K562 (cell line): ENCODE measurements at regions of chr18 and their contacts with region 1.

Region 1: DNA sequence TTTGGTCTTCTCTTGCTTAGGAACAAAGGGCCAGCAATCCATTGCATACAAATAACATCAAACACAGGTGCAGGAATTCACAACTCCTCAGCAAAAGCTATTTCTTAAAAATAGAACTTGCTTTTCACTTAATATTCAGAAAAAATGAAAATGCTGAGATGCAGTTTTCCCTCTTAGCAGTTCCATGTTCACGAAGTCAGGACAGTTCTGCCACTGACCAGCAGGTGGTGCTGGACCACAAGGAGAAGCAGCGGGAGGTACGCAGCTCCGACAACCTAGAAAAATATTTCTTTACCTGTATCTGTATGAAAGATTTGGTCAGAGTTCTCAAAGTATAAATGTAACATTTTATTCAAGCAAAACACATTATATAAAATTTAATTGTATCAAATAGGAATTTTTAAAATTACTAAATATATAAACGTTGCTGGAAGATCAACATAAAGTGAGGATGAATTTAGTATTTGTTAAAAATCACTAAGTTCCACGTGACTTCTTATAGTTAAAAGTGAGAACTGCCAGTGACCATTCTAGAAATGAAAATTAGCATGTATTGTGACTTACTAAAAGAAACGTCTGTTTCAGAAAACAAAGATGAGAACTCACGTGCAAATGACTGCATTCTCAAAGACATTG is 48.8 kb downstream of the ADNP2 start:
- DNase-seq: peak; percentile 50 to 74 (median 61)
- ATAC-seq: peak; percentile 79
- H3K4me3 ChIP-seq: no peak overlapping the region
- H3K27ac ChIP-seq: no peak overlapping the region
- H3K4me1 ChIP-seq: no peaks in the 10 kb centered on the region
- H3K27me3 ChIP-seq: no peaks in the 10 kb centered on the region
- CTCF ChIP-seq: peak; percentile 69 to 86 (median 81)
- EP300 ChIP-seq: no peak
- POLR2A ChIP-seq: no peak
- RAD21 ChIP-seq: peak; percentile 43 to 54

Region 2: DNA sequence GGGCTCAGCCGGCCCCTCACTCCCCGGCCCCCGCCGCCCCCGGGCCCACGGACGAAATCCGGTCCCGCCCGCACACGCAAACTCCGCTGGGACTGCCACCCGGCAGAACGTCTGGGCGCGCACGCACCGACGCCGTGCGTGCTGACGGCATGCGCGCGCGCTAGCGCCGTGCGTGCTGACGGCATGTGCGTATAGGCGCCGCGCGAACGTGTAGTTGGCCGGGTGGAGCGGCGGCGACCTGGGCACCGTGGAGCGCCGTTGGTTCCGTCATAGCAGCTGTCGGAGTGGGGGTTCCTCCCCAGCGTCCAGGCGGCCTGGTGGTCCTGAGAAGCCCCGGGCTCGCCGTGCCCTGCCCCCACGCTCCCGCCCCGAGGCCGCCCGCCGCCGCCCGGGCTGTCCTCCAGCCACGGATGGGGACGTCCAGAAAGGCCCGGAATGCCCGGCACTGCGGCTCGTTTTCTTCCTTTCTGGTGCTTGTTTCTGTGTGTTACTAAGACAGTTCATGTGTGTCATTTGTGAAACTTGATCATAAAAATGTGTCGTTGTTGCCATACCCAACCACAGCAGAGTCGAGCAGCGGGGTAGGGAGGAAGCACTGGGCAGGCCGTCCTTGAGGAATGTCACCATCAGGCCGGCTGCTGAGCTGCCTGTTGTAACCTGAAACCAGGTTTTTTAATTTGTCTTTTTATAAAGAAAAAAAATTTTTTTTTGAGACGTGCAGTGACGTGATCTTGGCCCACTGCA is 169.2 kb before region 1 on chr18 and contains the start of gene TXNL4A:
- CTCF ChIA-PET with region 1: no interaction called
- POLR2A ChIA-PET with region 1: no interaction called
- in situ Hi-C with region 1: no loop called
- intact Hi-C with region 1: loop called (anchors 2 kb)
- DNase-seq: peak; percentile 73 to 89 (median 82)
- ATAC-seq: peak; percentile 96
- H3K4me3 ChIP-seq: peak within 1 kb of the TSS; percentile 81
- H3K27ac ChIP-seq: peak within 1 kb of the TSS; percentile 95
- H3K4me1 ChIP-seq: peaks cover 11 to 12% of the 10 kb centered on the region in 2 experiments; a peak in 4 of 5 replicates
- H3K27me3 ChIP-seq: no peaks in the 10 kb centered on the region
- CTCF ChIP-seq: no peak
- EP300 ChIP-seq: no peak
- POLR2A ChIP-seq: peak; percentile 84
- RAD21 ChIP-seq: no peak
- polyA plus RNA-seq, gene TXNL4A: 27.0 to 51.2 TPM

Region 3: GRCh38 chr18:80034068-80034851 is 123.6 kb before region 1 on chr18 and contains the start of gene RBFA:
- CTCF ChIA-PET with region 1: no interaction called
- POLR2A ChIA-PET with region 1: interaction called, 3 read pairs
- in situ Hi-C with region 1: no loop called
- intact Hi-C with region 1: loop called (anchors 10 kb)
- DNase-seq: peak; percentile 85 to 95 (median 92)
- ATAC-seq: peak; percentile 88
- H3K4me3 ChIP-seq: peak within 1 kb of the TSS; percentile 78
- H3K27ac ChIP-seq: peak within 1 kb of the TSS; percentile 73
- H3K4me1 ChIP-seq: peaks cover 4 to 9% of the 10 kb centered on the region in 2 experiments; a peak in 4 of 5 replicates
- H3K27me3 ChIP-seq: no peaks in the 10 kb centered on the region
- CTCF ChIP-seq: peak; percentile 36 to 61 (median 41)
- EP300 ChIP-seq: no peak
- POLR2A ChIP-seq: peak; percentile 86
- RAD21 ChIP-seq: 0 out of 4 replicates have a peak, but pooled peaks of 1 of the 2 experiments have one; percentile 5
- polyA plus RNA-seq, gene RBFA: 3.4 to 4.8 TPM

Region 4: GRCh38 chr18:80254971-80255500 is 97.2 kb after region 1 on chr18:
- CTCF ChIA-PET with region 1: interaction called, 20 read pairs
- POLR2A ChIA-PET with region 1: no interaction called
- in situ Hi-C with region 1: loop called (anchors 5 kb)
- intact Hi-C with region 1: no loop called
- DNase-seq: no peak
- ATAC-seq: no peak
- H3K4me3 ChIP-seq: no peak overlapping the region
- H3K27ac ChIP-seq: no peak overlapping the region
- H3K4me1 ChIP-seq: no peaks in the 10 kb centered on the region
- H3K27me3 ChIP-seq: no peaks in the 10 kb centered on the region
- CTCF ChIP-seq: no peak
- EP300 ChIP-seq: no peak
- POLR2A ChIP-seq: no peak
- RAD21 ChIP-seq: no peak